ENCODE measurements at regions of chr3 and their contacts with region 1.

Region 1: DNA sequence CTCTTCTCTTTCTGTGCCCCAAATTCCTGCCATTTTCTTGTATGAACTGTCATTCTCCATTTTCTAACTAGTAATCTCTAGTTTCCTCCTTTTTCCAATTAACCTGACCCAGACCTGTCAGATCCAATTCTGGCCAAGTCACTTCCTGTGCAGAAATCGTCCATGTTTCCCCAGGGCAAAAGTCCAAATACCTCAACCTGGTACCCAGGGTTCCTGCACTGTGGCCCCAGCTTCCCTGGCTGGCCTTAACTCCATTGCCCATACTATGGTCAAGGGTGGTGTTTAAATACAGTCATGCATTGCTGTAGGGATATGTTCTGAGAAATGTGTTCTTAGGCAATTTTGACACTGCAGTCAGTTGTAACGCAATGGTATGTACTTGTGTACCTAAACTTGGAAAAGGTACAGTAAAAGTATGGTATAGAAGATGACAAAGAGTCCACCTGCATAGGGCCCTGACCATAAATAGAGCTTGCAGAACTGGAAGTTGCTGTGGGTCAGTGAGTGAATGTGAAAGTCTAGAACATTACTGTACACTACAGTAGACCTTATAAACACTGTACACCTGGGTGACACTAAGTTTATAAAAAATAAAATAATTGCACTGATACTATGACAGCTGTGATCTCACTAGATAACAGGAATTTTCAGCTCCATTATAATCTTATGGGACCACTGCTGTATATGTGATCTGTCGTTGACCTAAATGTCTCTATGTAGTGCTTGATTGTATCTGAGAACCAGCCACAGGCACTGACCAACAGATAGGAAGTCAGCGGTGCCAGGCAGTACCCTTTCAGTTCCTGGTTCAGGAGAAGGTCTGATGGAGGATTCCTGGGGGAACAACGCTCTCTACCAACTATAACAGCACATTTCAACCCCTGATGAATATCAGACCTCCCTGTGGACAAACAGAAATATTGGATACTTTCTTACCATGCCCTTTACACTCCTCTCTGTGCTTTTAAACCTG is 336.1 kb upstream of the PROK2 start:
- DNase-seq: no peak
- CTCF ChIP-seq: no peak

Region 2: DNA sequence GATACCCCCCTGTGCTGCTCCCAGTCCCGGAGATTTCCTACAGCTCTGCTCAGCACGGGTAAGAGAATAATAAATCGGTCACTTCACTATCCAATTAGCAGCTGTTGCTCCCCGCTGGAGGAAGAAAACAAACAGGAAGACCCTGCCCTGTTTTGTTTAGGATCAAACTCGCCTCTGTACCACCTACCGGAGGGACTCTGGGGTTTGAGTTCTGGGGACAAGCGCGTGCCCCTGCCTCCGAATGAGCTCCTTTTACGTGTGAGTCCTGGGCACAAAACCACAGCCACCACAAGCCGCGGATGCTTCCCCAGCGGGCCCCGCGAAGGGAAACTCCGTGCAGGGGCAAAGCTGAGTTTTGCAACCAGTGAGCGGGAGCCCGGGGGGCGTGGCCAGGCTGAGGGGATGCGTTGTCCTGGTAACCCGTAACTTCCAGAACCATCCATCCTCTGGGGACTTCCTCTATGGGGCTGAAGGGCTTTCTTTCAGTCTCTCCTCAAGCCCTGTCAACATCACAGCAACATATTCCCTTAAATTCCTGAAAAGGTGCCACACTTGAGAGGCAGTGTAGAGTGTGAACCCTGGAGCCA is 20.4 kb before region 1 on chr3:
- CTCF ChIA-PET with region 1: interaction called, 54 read pairs
- POLR2A ChIA-PET with region 1: no interaction called
- DNase-seq: peak; percentile 85
- CTCF ChIP-seq: no peak

Measured in GM10248 (cell line).